Activated T-helper 2 cell treated with anti-CD3 and anti-CD28 coated beads, Interferon-gamma antibody, Interleukin-2, Interleukin-4, amounts not matched to agents 10 μg/mL and 5 μg/mL and 100 μg/mL, durations not matched to agents 14 hours and 24 hours and 36 hours (primary cell): ENCODE measurements at regions of chr7 and their contacts with region 1.

Region 1: GRCh38 chr7:6706677-6707544 is at the start of gene ZNF12:
- DNase-seq: peak; percentile 92
- H3K4me3 Mint-ChIP-seq: peak within 1 kb of the TSS; percentile 91
- H3K27ac Mint-ChIP-seq: peak within 1 kb of the TSS; percentile 79
- H3K4me1 Mint-ChIP-seq: peaks cover 26% of the 10 kb centered on the region
- H3K27me3 Mint-ChIP-seq: peaks cover 6% of the 10 kb centered on the region
- total RNA-seq, gene ZNF12: 21.9 and 22.8 TPM in 2 replicates

Region 2: GRCh38 chr7:6294839-6295238 is 412.1 kb before region 1 on chr7:
- intact Hi-C with region 1: no loop called
- DNase-seq: no peak
- H3K4me3 Mint-ChIP-seq: no peak overlapping the region
- H3K27ac Mint-ChIP-seq: no peak overlapping the region
- H3K4me1 Mint-ChIP-seq: no peaks in the 10 kb centered on the region
- H3K27me3 Mint-ChIP-seq: peaks cover under 1% of the 10 kb centered on the region

Region 3: GRCh38 chr7:6447581-6448199 is 259.2 kb before region 1 on chr7 and contains the start of gene DAGLB:
- intact Hi-C with region 1: loop called (anchors 5 kb)
- DNase-seq: peak; percentile 96
- H3K4me3 Mint-ChIP-seq: peak within 1 kb of the TSS; percentile 92
- H3K27ac Mint-ChIP-seq: peak within 1 kb of the TSS; percentile 90
- H3K4me1 Mint-ChIP-seq: peaks cover 20% of the 10 kb centered on the region
- H3K27me3 Mint-ChIP-seq: no peaks in the 10 kb centered on the region
- total RNA-seq, gene DAGLB: 21.8 and 22.3 TPM in 2 replicates

Region 4: DNA sequence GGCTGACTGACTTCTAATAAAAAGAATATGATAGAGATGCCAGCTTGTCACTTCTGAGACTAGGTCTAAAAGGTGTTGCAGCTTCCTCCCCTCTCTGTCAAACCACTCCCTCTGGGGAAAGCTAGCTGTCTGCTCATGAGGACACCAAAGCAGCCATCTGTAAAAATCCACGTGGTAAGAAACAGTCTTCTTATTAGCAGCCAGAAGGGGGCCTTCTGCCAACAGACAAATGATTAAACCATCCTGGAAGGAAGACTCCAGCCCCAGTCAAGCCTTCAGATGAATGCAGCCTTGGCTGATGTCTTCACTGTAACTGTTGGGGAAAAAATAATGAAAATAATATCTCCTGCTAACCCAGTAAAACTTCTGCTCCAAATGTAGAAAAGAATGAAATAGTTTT is 217.3 kb before region 1 on chr7:
- intact Hi-C with region 1: no loop called
- DNase-seq: no peak
- H3K4me3 Mint-ChIP-seq: no peak overlapping the region
- H3K27ac Mint-ChIP-seq: no peak overlapping the region
- H3K4me1 Mint-ChIP-seq: no peaks in the 10 kb centered on the region
- H3K27me3 Mint-ChIP-seq: peaks cover 3% of the 10 kb centered on the region

Region 5: DNA sequence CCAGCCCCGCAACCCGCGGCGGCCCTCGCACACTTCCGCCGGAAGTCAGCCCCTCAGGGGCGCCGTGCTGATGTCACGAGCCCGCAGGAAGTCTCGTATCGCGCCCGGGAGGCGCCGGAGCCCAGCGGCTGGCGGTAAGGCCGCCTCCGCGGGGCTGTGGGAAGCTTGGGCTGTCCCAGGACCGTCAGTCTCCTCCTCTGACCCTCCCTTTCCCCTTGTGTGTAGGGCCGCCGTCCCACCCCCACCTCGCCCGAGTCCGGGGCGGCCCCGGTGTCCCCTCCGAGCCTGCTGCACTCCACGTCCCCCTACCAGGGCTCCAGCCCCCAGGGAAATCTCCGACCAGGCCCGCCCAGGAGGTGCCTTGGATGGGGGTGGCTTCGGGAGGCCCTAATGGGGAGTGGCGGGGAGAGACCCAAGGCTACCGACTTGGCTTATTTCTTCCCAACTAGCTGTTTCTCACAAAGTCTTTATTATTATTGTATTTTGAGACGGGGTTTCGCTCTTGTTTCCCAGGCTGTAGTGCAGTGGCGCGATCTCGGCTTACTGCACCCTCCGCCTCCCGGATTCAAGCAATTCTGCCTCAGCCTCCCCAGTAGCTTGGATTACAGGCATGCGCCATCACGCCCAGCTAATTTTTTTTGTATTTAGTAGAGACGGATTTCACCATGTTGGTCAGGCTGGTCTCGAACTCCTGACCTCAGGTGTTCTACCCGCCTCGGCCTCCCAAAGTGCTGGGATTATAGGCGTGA is 129.4 kb before region 1 on chr7 and contains the start of gene ZDHHC4:
- intact Hi-C with region 1: loop called (anchors 5 kb)
- DNase-seq: peak; percentile 80
- H3K4me3 Mint-ChIP-seq: peak within 1 kb of the TSS; percentile 82
- H3K27ac Mint-ChIP-seq: peak within 1 kb of the TSS; percentile 82
- H3K4me1 Mint-ChIP-seq: peaks cover 23% of the 10 kb centered on the region
- H3K27me3 Mint-ChIP-seq: no peaks in the 10 kb centered on the region
- total RNA-seq, gene ZDHHC4: 23.9 and 29.9 TPM in 2 replicates

Region 6: GRCh38 chr7:6680146-6680545 is 26.8 kb before region 1 on chr7:
- intact Hi-C with region 1: no loop called
- DNase-seq: no peak
- H3K4me3 Mint-ChIP-seq: no peak overlapping the region
- H3K27ac Mint-ChIP-seq: no peak overlapping the region
- H3K4me1 Mint-ChIP-seq: no peaks in the 10 kb centered on the region
- H3K27me3 Mint-ChIP-seq: no peaks in the 10 kb centered on the region

Region 7: DNA sequence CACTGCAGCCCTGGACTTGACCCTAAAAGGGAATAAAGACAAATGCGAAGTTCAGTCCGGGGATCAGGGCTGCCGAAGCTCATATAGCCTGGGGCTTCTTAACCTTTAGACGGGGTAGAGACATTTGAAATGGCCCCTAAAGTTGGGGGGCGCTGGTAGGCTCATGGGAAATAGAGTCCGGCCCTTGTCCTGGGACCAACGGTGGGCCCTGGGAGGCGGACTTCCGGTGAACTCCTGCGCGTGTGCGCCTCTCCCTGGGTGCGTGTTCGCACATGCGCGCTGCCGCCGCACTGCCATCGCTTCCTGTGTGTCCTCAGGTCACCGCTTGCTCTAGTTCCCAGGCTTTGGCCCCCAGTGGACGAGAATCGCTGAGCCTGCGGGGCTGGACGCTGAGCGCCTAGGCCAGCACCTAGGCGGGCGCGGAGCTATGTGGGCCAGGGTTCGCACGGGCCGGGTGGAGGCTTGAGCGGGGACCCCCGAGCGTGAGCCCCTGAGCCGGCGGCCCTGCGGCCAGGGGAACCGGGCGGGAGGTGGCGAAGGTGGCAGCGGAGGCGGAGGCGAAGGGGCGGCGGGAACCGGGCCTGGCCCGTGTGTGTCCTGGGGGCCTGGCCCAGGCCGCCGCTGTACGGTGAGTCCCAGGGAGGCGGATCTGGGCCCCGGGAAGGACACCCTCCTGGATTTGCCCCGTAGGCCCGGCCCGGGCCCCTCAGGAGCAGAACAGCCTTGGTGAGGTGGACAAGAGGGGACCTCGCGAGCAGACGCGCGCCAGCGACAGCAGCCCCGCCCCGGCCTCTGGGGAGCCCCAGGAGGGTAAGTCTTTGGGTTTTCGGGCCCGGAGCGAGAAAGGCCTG is 22.8 kb after region 1 on chr7:
- intact Hi-C with region 1: loop called (anchors 1 kb)
- DNase-seq: peak; percentile 79
- H3K4me3 Mint-ChIP-seq: peak overlapping the region; percentile 94
- H3K27ac Mint-ChIP-seq: peak overlapping the region; percentile 88
- H3K4me1 Mint-ChIP-seq: peaks cover 16% of the 10 kb centered on the region
- H3K27me3 Mint-ChIP-seq: no peaks in the 10 kb centered on the region